ENCODE measurements at regions of chr11 and their contacts with region 1.

Region 1: DNA sequence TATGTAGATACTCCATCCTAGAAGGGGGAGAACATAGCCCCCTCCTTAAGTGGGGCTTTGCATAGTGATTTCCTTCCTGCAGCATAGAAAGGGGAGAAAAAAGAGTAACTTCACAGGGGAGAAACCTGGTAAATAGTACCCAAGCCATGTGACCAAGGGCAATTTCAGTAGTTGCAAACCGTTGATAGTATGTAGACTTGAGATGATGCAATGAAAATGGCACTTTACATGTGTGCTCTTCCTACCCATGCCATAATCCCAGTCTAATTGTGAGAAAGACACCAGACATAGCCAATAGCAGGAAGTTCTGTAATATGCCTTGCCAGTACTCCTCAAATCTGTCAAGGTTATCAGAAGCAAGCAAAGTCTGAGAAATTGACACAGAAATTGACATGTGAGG is 104.1 kb downstream of the NCAM1 start:
- DNase-seq: no peak
- ATAC-seq: no peak
- H3K4me3 ChIP-seq: no peak overlapping the region
- H3K27ac ChIP-seq: no peak overlapping the region
- H3K4me1 ChIP-seq: peaks cover 0 to 10% (median 0%) of the 10 kb centered on the region in 12 donors
- H3K27me3 ChIP-seq: no peaks in the 10 kb centered on the region
- CTCF ChIP-seq: no peak
- POLR2A ChIP-seq: no peak

Region 2: DNA sequence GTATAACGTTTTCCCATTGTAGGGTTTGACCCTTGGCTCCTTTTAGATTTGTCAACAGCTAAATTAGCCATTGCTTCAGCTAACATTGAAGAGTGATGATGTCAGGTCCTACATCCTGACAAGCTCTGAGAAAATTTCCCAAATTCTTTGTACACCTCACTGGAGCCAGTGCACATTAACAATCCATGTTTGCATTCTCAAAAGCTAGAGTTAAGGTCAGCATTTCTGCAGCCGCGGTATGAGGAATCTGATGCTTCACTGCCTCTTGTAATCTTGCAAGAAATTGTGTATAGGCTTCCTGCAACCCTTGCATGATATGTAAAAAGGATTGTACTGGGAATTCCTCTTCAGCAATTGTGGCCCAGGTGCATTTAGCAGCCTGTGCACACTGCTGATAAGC is 137.2 kb before region 1 on chr11:
- intact Hi-C with region 1: no loop called
- DNase-seq: no peak
- ATAC-seq: no peak
- H3K4me3 ChIP-seq: no peak overlapping the region
- H3K27ac ChIP-seq: no peak overlapping the region
- H3K4me1 ChIP-seq: peaks cover 0 to 4% (median 0%) of the 10 kb centered on the region in 12 donors
- H3K27me3 ChIP-seq: no peaks in the 10 kb centered on the region
- CTCF ChIP-seq: no peak
- POLR2A ChIP-seq: no peak

Region 3: GRCh38 chr11:113001709-113002108 is 63.6 kb before region 1 on chr11:
- intact Hi-C with region 1: loop called in 1 of 10 experiments (anchors 10 kb)
- DNase-seq: no peak
- ATAC-seq: peak in 1 of 4 donors; percentile 11
- H3K4me3 ChIP-seq: no peak overlapping the region
- H3K27ac ChIP-seq: no peak overlapping the region
- H3K4me1 ChIP-seq: peaks cover 0 to 50% (median 13%) of the 10 kb centered on the region in 12 donors
- H3K27me3 ChIP-seq: no peaks in the 10 kb centered on the region
- CTCF ChIP-seq: no peak
- POLR2A ChIP-seq: no peak